ENCODE measurements at regions of chr16 and their contacts with region 1.

Region 1: GRCh38 chr16:79897453-79898146 is 297.1 kb upstream of the MAF start:
- DNase-seq: peak; percentile 65 to 87
- H3K4me3 ChIP-seq: no peak overlapping the region
- H3K4me3 Mint-ChIP-seq: peak overlapping the region; percentile 2
- H3K27ac Mint-ChIP-seq: peak overlapping the region; percentile 39
- H3K4me1 ChIP-seq: peaks cover 53% of the 10 kb centered on the region
- H3K4me1 Mint-ChIP-seq: peaks cover 46% of the 10 kb centered on the region
- H3K27me3 ChIP-seq: no peaks in the 10 kb centered on the region
- H3K27me3 Mint-ChIP-seq: no peaks in the 10 kb centered on the region
- CTCF ChIP-seq: no peak

Region 2: GRCh38 chr16:79792664-79793351 is 104.8 kb before region 1 on chr16:
- CTCF ChIA-PET with region 1: no interaction called
- POLR2A ChIA-PET with region 1: interaction called, 10 read pairs
- intact Hi-C with region 1: no loop called
- DNase-seq: no peak
- H3K4me3 ChIP-seq: no peak overlapping the region
- H3K4me3 Mint-ChIP-seq: no peak overlapping the region
- H3K27ac Mint-ChIP-seq: no peak overlapping the region
- H3K4me1 ChIP-seq: 0 out of 2 replicates have a peak, but pooled peaks cover 8% of the 10 kb centered on the region
- H3K4me1 Mint-ChIP-seq: no peaks in the 10 kb centered on the region
- H3K27me3 ChIP-seq: no peaks in the 10 kb centered on the region
- H3K27me3 Mint-ChIP-seq: no peaks in the 10 kb centered on the region
- CTCF ChIP-seq: no peak

Measured in Caco-2 (cell line).